PC-3 (cell line): ENCODE measurements at regions of chr3 and their contacts with region 1.

Region 1: DNA sequence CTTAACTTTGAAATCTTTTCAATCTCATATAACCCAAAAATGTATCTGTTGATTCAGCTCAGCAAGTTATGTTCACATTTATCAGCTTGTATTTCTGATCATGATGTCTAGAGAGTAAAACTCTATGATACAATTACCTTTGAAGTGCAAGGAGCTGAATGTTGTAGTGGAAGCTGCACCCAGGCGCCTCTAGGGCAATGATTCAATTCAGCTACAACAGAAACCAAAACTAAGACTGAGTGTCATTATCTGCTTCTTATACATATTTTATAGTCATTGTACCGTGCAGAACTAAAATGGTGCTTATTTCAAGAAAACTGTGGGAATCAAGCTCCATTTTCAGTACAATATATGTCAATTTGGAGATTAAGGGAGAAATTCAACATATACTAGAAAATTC is 1237.5 kb downstream of the ZPLD1 start:
- DNase-seq: no peak
- ATAC-seq: no peak
- H3K4me3 ChIP-seq: no peak overlapping the region
- H3K27ac ChIP-seq: no peak overlapping the region
- H3K4me1 ChIP-seq: no peaks in the 10 kb centered on the region
- H3K27me3 ChIP-seq: no peaks in the 10 kb centered on the region
- CTCF ChIP-seq: no peak

Region 2: GRCh38 chr3:103629391-103629790 is 43.0 kb before region 1 on chr3:
- CTCF ChIA-PET with region 1: no interaction called
- POLR2A ChIA-PET with region 1: no interaction called
- intact Hi-C with region 1: loop called (anchors 1 kb)
- DNase-seq: no peak
- ATAC-seq: no peak
- H3K4me3 ChIP-seq: no peak overlapping the region
- H3K27ac ChIP-seq: no peak overlapping the region
- H3K4me1 ChIP-seq: no peaks in the 10 kb centered on the region
- H3K27me3 ChIP-seq: no peaks in the 10 kb centered on the region
- CTCF ChIP-seq: no peak

Region 3: DNA sequence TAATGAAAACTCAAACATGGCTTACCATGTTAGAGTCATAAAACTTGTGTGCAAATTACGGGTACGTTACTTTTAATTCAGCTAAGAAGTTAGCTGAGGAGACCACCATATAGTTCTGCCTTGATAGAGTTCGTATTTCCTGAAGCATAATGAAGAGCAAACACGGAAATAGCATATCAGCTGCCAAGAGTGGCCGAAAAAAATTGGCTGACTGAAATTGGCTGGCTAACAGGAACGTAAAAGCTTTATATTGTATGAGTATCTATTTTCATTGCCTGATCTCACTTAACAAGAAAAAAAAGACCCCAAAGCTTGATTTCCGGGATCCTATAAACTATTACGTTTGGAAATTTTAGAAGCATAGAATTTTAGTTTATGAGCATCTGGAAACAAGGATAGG is 14.6 kb before region 1 on chr3:
- CTCF ChIA-PET with region 1: no interaction called
- POLR2A ChIA-PET with region 1: no interaction called
- intact Hi-C with region 1: no loop called
- DNase-seq: no peak
- ATAC-seq: no peak
- H3K4me3 ChIP-seq: no peak overlapping the region
- H3K27ac ChIP-seq: no peak overlapping the region
- H3K4me1 ChIP-seq: no peaks in the 10 kb centered on the region
- H3K27me3 ChIP-seq: peaks cover 30% of the 10 kb centered on the region; the same call in 1 of the 2 replicates
- CTCF ChIP-seq: no peak

Region 4: GRCh38 chr3:103803787-103804186 is 131.4 kb after region 1 on chr3:
- CTCF ChIA-PET with region 1: no interaction called
- POLR2A ChIA-PET with region 1: no interaction called
- intact Hi-C with region 1: no loop called
- DNase-seq: no peak
- ATAC-seq: no peak
- H3K4me3 ChIP-seq: no peak overlapping the region
- H3K27ac ChIP-seq: no peak overlapping the region
- H3K4me1 ChIP-seq: no peaks in the 10 kb centered on the region
- H3K27me3 ChIP-seq: no peaks in the 10 kb centered on the region
- CTCF ChIP-seq: no peak

Region 5: GRCh38 chr3:103991461-103992115 is 319.2 kb after region 1 on chr3:
- CTCF ChIA-PET with region 1: no interaction called
- POLR2A ChIA-PET with region 1: no interaction called
- intact Hi-C with region 1: loop called (anchors 10 kb)
- DNase-seq: peak; percentile 57
- ATAC-seq: peak; percentile 74; the same call in 1 of the 2 replicates
- H3K4me3 ChIP-seq: no peak overlapping the region
- H3K27ac ChIP-seq: no peak overlapping the region
- H3K4me1 ChIP-seq: no peaks in the 10 kb centered on the region
- H3K27me3 ChIP-seq: peaks cover 6% of the 10 kb centered on the region; the same call in 1 of the 2 replicates
- CTCF ChIP-seq: peak; percentile 91